ENCODE measurements at regions of chr15 and their contacts with region 1.

Region 1: DNA sequence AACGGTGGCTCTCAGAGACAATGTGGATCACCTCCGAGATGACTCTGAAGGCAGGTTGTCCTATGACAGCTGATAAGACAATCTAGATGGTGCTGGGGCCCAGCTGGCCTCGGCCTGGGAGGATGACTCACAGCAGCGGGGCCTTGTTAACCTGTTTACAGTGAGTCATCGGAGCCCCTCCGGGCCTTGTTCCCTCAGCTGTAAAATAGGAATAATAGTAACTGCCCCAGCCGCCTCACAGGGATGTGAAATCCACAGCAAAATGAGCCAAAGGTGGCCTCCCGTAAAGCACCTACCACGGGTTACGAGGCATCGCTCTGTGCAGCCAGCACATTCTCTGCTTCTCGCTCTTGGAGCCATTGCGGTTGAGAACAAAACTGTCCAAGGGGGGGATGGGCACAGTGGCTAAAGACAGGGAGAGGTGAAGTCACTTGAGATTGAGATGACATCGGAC is 88.6 kb upstream of the RASGRF1 start:
- DNase-seq: peak; percentile 39
- H3K4me3 ChIP-seq: no peak overlapping the region
- H3K27ac ChIP-seq: no peak overlapping the region
- H3K4me1 ChIP-seq: peaks cover 6% of the 10 kb centered on the region
- H3K27me3 ChIP-seq: no peaks in the 10 kb centered on the region
- CTCF ChIP-seq: no peak

Region 2: GRCh38 chr15:79035111-79035601 is 144.0 kb before region 1 on chr15:
- CTCF ChIA-PET with region 1: interaction called, 10 read pairs
- dilution Hi-C with region 1: no loop called
- in situ Hi-C with region 1: no loop called
- intact Hi-C with region 1: no loop called
- DNase-seq: peak; percentile 63
- H3K4me3 ChIP-seq: no peak overlapping the region
- H3K27ac ChIP-seq: no peak overlapping the region
- H3K4me1 ChIP-seq: peaks cover 20% of the 10 kb centered on the region
- H3K27me3 ChIP-seq: no peaks in the 10 kb centered on the region
- CTCF ChIP-seq: peak; percentile 53 to 68

Region 3: DNA sequence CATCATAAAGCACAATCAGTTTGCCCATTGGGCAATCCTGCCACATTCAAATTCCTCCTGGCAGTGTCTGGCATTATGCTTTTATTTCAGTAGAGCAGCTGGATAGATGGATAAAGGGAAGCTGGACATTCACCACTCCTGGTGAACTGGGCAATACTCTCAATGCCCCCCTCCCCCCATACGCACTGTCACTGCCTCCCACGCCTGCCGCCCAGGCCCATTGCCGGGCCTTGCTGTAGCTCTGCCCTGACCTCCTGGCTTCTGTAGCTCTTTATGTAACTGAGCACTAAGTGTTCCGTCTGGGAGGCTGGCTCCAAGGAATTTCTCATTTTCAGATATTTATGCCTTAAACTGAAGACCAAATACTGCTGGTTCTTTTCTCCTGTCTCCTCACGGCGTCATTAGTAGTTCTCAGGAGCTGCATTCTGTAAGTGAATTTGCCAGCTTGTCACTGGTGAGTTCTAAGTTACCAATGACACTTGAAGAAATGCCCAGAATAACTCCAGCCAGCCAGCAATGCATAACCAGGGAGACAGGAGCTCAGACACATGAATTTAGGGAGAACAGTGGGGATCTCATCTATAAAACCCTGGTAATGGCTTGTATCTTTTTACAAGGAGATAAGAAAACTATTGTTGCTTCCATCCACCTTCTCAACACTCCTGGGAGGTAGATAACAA is 63.0 kb before region 1 on chr15:
- CTCF ChIA-PET with region 1: no interaction called
- dilution Hi-C with region 1: loop called (anchors 5 kb)
- in situ Hi-C with region 1: no loop called
- intact Hi-C with region 1: no loop called
- DNase-seq: no peak
- H3K4me3 ChIP-seq: no peak overlapping the region
- H3K27ac ChIP-seq: no peak overlapping the region
- H3K4me1 ChIP-seq: no peaks in the 10 kb centered on the region
- H3K27me3 ChIP-seq: no peaks in the 10 kb centered on the region
- CTCF ChIP-seq: no peak